Activated T-helper 2 cell treated with anti-CD3 and anti-CD28 coated beads, Interferon-gamma antibody, Interleukin-2, Interleukin-4, amounts not matched to agents 10 μg/mL and 5 μg/mL and 100 μg/mL, durations not matched to agents 14 hours and 24 hours and 36 hours (primary cell): ENCODE measurements at regions of chr7 and their contacts with region 1.

Region 1: DNA sequence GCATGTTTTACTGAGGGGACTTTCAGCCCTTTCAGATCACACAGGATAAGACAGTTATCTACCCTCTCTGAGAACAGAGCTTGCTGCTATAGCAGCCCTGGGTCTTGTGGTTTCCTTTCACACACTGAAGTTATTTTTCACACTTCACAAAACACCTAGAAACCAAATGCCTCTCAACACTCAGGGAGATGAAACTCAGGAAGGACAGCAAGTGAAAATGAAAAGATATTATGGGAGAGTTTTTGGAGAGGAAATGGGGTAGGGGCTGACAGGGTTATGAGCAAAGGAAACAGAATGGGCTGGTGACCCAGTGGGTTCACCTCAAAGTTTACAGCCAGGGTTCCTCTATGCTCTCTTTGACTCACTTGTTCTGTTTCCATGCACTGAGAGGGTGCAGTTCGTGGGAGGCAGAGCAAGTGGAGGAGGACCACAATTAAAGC is 17.0 kb upstream of the GIMAP2 start:
- DNase-seq: peak; percentile 67
- H3K4me3 Mint-ChIP-seq: peak overlapping the region; percentile 31
- H3K27ac Mint-ChIP-seq: peak overlapping the region; percentile 92
- H3K4me1 Mint-ChIP-seq: peaks cover 71% of the 10 kb centered on the region
- H3K27me3 Mint-ChIP-seq: no peaks in the 10 kb centered on the region

Region 2: DNA sequence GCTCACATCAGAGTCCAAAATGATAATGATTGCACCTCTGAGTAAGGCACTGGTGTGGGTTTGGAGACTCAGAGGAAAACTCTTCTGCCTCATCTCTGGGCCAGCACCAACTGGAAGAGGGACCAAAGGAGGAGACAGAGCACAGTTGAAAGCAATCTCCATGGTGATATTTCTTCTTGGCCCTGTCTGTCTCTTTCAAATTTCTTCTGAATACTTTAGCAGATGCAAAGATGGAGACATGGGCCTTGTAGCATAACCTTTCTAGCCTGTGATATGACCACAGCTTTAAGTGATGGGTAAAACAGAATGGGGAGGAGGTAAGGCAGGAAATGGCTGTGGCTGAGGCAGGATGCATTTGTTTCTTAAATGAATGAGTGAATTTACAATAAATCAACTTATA is 166.0 kb before region 1 on chr7:
- intact Hi-C with region 1: loop called (anchors 5 kb)
- DNase-seq: peak; percentile 31
- H3K4me3 Mint-ChIP-seq: peak overlapping the region; percentile 40
- H3K27ac Mint-ChIP-seq: peak overlapping the region; percentile 81
- H3K4me1 Mint-ChIP-seq: peaks cover 60% of the 10 kb centered on the region
- H3K27me3 Mint-ChIP-seq: no peaks in the 10 kb centered on the region

Region 3: GRCh38 chr7:150586785-150587152 is 81.7 kb before region 1 on chr7:
- intact Hi-C with region 1: loop called (anchors 5 kb)
- DNase-seq: no peak
- H3K4me3 Mint-ChIP-seq: no peak overlapping the region
- H3K27ac Mint-ChIP-seq: peak overlapping the region; percentile 79
- H3K4me1 Mint-ChIP-seq: peaks cover 31% of the 10 kb centered on the region
- H3K27me3 Mint-ChIP-seq: no peaks in the 10 kb centered on the region

Region 4: DNA sequence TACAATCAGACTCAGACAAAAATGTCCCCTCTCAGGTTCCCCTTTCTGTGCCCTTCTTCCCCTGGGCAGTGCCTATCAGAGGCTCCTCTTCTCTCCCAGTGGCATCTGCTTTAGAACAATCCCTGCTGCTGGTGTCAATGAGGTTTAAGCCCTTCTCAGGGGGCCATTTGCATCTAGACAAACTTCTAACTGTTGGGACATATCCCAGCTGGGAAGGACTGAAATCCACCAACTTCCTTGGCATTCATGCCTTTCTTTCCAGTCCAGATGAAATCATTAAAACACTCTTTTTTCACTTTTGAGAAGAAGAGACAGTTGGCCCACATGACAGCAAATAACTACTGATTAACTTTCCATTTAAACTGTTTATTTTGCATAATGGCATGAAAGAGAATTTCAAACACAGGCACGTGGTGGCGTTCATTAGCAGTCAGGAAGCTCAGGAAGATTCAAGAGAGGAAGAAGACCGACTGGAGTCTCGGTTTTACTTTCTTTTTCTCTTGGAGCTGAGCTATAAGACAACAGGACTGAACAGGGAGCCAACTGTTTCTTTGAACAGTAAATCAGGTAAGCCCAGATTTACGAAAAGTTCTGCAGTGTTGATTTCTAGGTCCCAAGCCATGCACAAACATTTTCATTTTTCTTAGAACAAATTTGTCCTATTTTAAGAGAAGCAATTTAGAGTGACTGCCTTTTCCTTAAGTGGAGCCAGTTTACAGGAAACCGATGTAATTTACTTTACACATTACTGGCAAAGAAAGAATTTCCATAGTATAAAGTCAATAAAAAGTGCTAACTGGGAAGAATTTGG is 16.9 kb after region 1 on chr7 and contains the start of gene GIMAP2:
- intact Hi-C with region 1: loop called (anchors 1 kb)
- DNase-seq: no peak
- H3K4me3 Mint-ChIP-seq: peak within 1 kb of the TSS; percentile 99
- H3K27ac Mint-ChIP-seq: peak within 1 kb of the TSS; percentile 99
- H3K4me1 Mint-ChIP-seq: peaks cover 53% of the 10 kb centered on the region
- H3K27me3 Mint-ChIP-seq: no peaks in the 10 kb centered on the region
- total RNA-seq, gene GIMAP2: 29.3 and 30.5 TPM in 2 replicates

Region 5: DNA sequence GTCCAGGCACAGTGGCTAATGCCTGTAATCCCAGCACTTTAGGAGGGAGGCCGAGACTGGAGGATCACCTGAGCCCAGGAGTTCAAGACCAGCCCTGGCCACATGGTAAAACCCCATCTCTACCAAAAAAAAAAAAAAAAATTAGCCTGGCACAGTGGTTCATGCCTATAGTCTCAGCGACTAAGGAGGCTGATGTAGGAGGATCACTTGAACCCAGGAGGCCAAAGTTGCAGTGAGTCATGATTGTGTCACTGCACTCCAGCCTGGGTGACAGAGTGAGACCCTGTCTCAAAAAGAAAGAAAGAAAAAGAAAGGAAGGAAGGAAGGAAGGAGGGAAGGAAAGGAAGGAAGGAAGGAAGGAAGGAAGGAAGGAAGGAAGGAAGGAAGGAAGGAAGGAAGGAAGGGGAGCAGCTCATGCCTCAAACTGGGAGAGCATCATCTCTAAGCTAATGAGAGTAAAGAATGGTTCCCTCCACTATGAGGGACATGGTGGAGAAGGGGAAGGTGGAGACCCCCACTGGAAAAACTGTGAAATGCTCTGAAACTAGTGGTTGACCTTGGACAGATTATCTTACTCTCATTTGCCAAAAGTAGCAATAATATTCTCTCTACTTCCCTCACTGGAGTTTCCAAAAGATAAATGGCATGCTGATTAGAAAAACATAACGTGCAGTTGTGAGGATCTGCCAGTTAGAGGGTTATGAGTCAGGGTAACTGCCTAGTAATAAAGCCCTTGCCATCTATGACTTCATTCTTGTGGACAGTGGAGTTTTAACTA is 85.5 kb after region 1 on chr7:
- intact Hi-C with region 1: loop called (anchors 1 kb)
- DNase-seq: no peak
- H3K4me3 Mint-ChIP-seq: no peak overlapping the region
- H3K27ac Mint-ChIP-seq: peak overlapping the region; percentile 93
- H3K4me1 Mint-ChIP-seq: peaks cover 48% of the 10 kb centered on the region
- H3K27me3 Mint-ChIP-seq: no peaks in the 10 kb centered on the region

Region 6: GRCh38 chr7:150845421-150845861 is 176.9 kb after region 1 on chr7:
- intact Hi-C with region 1: no loop called
- DNase-seq: no peak
- H3K4me3 Mint-ChIP-seq: no peak overlapping the region
- H3K27ac Mint-ChIP-seq: no peak overlapping the region
- H3K4me1 Mint-ChIP-seq: no peaks in the 10 kb centered on the region
- H3K27me3 Mint-ChIP-seq: peaks cover 8% of the 10 kb centered on the region